H1 (cell line): ENCODE measurements at regions of chr4 and their contacts with region 1.

Region 1: DNA sequence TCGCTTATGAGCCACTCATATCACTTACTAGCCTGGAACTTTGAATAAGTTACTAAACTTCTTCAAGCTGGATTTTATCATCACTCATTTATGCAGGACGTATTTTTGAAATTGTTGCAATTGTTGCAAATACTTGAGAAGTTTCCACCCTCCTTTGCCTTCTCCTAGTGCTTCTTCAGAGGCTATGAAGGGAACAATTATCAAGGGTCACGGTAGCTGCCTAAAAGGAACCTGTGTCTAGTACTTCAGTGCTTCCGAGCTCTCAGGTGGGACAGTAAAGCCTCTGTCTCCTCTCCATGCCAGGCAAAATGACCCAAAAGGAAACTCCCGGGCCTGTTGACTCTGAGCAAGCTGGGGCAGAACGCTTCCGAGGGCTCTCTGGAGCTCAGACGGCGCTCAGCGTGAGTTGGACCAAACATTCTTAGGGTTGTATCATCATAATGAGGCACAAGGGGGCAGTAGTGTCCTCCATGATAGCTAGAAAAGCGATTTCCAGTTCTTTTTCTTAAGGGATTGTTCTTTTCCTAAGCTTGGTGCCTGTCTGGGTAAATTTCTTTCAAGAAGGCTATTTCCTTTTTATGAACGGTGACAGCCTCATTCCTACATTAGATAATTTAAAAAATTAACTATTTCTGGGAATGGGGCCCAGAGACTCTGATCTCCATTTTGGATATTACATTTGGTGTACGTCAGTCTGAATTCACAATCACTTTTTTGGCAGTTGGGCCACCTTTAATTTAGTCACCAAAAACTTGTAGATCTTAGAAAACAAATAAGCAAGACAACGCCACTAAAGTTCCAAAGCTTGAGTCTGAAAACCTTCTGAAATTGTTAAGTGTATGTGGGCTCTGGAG is 73.1 kb downstream of the PACRGL start:
- DNase-seq: peak; percentile 49 to 72
- H3K4me3 ChIP-seq: no peak overlapping the region
- H3K27ac ChIP-seq: no peak overlapping the region
- H3K4me1 ChIP-seq: no peaks in the 10 kb centered on the region
- H3K27me3 ChIP-seq: no peaks in the 10 kb centered on the region
- CTCF ChIP-seq: peak; percentile 36 to 77 (median 71)
- EP300 ChIP-seq: no peak
- POLR2A ChIP-seq: no peak
- RAD21 ChIP-seq: peak; percentile 86 to 88

Region 2: GRCh38 chr4:20323991-20324390 is 449.4 kb before region 1 on chr4:
- CTCF ChIA-PET with region 1: no interaction called
- POLR2A ChIA-PET with region 1: no interaction called
- DNase-seq: no peak
- H3K4me3 ChIP-seq: no peak overlapping the region
- H3K27ac ChIP-seq: no peak overlapping the region
- H3K4me1 ChIP-seq: no peaks in the 10 kb centered on the region
- H3K27me3 ChIP-seq: no peaks in the 10 kb centered on the region
- CTCF ChIP-seq: no peak
- EP300 ChIP-seq: no peak
- POLR2A ChIP-seq: no peak
- RAD21 ChIP-seq: no peak

Region 3: DNA sequence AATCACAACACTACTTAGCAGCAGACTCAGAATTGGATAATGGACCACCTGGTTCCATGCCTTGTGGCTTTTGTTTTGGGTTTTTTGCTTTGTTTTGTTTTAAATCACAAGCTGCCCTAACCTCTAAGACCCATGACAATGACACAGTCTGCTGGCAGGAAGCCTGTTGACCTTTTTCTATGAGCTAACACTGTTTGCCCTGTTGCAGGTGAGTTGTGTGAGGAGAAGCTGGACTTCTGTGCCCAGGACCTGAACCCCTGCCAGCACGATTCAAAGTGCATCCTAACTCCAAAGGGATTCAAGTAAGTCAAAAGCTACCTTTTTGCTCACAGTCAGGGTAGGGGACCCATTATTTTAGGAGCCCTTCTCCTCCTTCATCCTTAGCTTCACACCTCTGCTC is 183.9 kb before region 1 on chr4:
- CTCF ChIA-PET with region 1: no interaction called
- POLR2A ChIA-PET with region 1: no interaction called
- DNase-seq: no peak
- H3K4me3 ChIP-seq: no peak overlapping the region
- H3K27ac ChIP-seq: no peak overlapping the region
- H3K4me1 ChIP-seq: peaks cover 0 to 3% (median 1%) of the 10 kb centered on the region in 4 experiments; a peak in 2 of 7 replicates
- H3K27me3 ChIP-seq: no peaks in the 10 kb centered on the region
- CTCF ChIP-seq: no peak
- EP300 ChIP-seq: no peak
- POLR2A ChIP-seq: no peak
- RAD21 ChIP-seq: no peak

Region 4: DNA sequence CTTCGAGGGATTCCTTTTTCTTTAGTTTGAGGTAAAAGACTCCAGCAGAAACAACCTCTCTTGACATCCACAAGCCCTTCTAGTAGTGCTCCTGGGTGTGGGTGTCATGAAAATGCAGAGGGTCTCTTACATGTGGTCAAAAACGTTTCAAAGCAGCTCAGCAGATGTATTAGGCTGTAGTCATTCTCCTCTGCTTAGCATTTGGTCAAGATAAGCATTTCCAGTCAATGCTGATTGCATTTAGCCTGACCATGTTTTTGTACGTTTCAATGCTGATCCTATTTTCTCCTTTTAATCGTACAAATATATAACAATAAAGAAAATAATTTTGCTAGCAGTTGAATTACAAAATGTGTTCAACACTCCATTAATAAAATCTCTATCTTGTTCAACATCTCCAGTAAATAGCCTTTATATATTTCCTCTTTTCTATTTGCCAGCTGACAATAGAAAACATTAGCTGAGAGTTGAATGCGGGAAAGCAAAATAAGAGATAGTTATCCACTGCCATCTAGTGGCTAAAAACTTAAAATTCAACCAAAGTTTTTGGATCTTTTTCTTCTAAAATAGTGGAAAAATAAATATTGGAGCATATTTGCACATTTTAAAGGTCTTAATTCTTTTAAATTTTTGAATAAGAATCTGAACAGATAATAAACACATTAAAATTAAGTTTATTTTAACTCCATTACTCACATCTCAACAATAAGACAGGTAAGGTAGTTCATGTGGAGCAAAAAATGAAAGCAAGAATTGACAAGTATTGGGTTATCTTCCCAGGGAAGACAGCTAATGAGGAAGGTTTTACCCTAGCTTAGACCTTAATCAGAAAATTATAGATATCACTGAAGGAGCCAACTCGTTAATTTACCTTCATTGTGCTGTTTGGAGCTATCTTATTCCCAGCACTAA is 88.3 kb before region 1 on chr4:
- CTCF ChIA-PET with region 1: no interaction called
- POLR2A ChIA-PET with region 1: no interaction called
- DNase-seq: no peak
- H3K4me3 ChIP-seq: no peak overlapping the region
- H3K27ac ChIP-seq: 0 out of 2 replicates have a peak overlapping the region, but pooled peaks have one; percentile 42
- H3K4me1 ChIP-seq: no peaks in the 10 kb centered on the region
- H3K27me3 ChIP-seq: no peaks in the 10 kb centered on the region
- CTCF ChIP-seq: peak in 2 of 3 experiments; percentile 27 to 38; a peak in 2 of 4 replicates
- EP300 ChIP-seq: no peak
- POLR2A ChIP-seq: no peak
- RAD21 ChIP-seq: peak; percentile 68 to 76

Region 5: DNA sequence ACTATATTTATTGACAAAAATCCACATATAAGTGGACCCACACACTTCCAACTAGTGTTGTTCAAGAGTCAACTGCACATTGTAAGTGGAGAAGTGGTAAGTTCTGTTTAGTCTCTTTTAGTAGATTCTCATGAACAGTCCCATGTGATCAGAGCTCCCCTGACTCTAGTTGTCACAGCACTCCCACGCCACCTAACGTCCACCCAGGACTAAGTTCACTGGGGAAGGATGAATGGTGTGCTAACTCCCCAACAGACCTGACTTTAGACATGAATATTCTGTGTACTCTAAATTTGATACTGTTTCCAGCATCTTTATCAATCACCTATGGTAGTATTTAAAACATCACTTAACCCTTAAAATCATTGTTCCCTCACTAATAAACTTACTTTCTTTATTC is 13.3 kb before region 1 on chr4:
- CTCF ChIA-PET with region 1: interaction called, 22 read pairs
- POLR2A ChIA-PET with region 1: no interaction called
- DNase-seq: peak in 1 of 2 experiments; percentile 45
- H3K4me3 ChIP-seq: no peak overlapping the region
- H3K27ac ChIP-seq: no peak overlapping the region
- H3K4me1 ChIP-seq: no peaks in the 10 kb centered on the region
- H3K27me3 ChIP-seq: no peaks in the 10 kb centered on the region
- CTCF ChIP-seq: peak; percentile 3 to 45 (median 41); a peak in 2 of 4 replicates
- EP300 ChIP-seq: no peak
- POLR2A ChIP-seq: no peak
- RAD21 ChIP-seq: peak; percentile 54 to 61

Region 6: GRCh38 chr4:20787940-20788665 is 14.7 kb after region 1 on chr4:
- CTCF ChIA-PET with region 1: interaction called, 22 read pairs
- POLR2A ChIA-PET with region 1: no interaction called
- DNase-seq: no peak
- H3K4me3 ChIP-seq: no peak overlapping the region
- H3K27ac ChIP-seq: no peak overlapping the region
- H3K4me1 ChIP-seq: no peaks in the 10 kb centered on the region
- H3K27me3 ChIP-seq: no peaks in the 10 kb centered on the region
- CTCF ChIP-seq: no peak
- EP300 ChIP-seq: no peak
- POLR2A ChIP-seq: no peak
- RAD21 ChIP-seq: no peak

Region 7: GRCh38 chr4:21134994-21135393 is 361.6 kb after region 1 on chr4:
- CTCF ChIA-PET with region 1: interaction called, 51 read pairs
- POLR2A ChIA-PET with region 1: no interaction called
- DNase-seq: no peak
- H3K4me3 ChIP-seq: no peak overlapping the region
- H3K27ac ChIP-seq: no peak overlapping the region
- H3K4me1 ChIP-seq: no peaks in the 10 kb centered on the region
- H3K27me3 ChIP-seq: peaks cover 0 to 1% (median 0%) of the 10 kb centered on the region in 4 experiments; a peak in 1 of 7 replicates
- CTCF ChIP-seq: peak in 2 of 3 experiments; percentile 31 to 52; a peak in 2 of 4 replicates
- EP300 ChIP-seq: no peak
- POLR2A ChIP-seq: no peak
- RAD21 ChIP-seq: peak; percentile 75

Region 8: DNA sequence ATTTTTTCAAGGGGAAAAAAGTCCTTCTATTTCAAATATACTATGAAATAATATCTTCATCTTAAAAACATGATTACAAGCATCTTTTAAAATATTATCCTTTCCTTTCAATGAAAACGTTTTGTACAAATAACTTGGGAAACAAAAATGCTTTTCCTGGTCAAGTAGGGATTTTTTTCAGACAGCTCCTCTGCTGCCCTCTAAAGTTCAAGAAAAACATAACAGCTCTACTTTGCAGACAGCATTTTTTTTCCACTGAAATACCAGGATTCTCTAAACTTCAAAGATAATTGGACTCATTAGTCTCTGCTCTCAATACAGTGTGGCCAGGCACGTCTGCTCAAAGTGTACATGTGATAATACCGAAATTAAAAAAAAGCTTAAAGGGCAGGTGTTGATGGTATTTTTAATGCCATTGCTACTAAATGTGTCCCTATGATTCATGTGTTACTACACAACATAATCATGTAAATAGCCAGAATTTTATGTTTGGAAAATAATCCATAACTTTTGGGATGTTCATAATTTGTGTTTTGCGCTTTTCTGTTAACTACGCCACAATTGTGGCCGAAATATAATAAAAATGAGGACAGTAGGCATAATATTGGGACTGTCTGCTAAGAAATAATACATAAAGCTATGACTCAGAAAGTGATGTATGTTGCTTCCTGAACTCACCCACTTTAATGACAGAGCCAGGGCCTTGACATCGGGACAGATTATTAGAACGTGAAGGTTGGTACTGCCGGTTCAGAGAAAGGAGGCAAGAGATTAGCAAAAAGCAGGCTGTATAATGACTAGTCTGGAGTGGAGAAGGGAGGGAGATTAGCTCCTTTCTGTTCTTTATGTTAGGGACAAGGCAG is 696.3 kb after region 1 on chr4:
- CTCF ChIA-PET with region 1: interaction called, 25 read pairs
- POLR2A ChIA-PET with region 1: no interaction called
- DNase-seq: no peak
- H3K4me3 ChIP-seq: no peak overlapping the region
- H3K27ac ChIP-seq: no peak overlapping the region
- H3K4me1 ChIP-seq: no peaks in the 10 kb centered on the region
- H3K27me3 ChIP-seq: no peaks in the 10 kb centered on the region
- CTCF ChIP-seq: peak in 2 of 3 experiments; percentile 37 to 53; a peak in 2 of 4 replicates
- EP300 ChIP-seq: no peak
- POLR2A ChIP-seq: no peak
- RAD21 ChIP-seq: peak; percentile 71 to 76